ENCODE measurements at regions of chr11 and their contacts with region 1.

Region 1: DNA sequence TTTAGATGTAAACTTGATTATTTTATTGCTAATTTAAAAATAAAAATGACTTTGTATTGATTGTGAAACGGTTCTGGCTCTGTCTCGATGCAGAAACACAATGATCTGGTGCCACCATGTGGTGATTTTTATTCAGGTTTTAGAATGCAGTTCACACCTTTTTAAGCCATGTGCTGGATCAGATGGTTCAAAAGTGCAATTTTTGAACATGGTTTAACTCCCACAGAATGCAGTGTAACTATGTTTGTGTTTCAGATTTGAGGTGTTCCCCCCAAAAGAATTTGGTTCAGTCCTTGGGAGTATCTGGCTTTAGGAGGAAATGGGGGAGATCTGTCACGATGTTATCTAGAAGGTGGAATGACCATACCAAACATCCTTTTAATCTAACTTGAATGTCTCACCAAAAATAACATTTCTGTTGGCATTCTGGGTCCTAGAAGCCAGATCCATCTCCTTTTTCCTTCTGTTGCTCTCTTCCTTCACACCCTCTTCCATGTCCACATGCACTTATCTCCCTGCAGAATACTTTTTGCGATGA is 7.9 kb downstream of the MRPL16 start:
- DNase-seq: peak; percentile 75
- H3K4me3 ChIP-seq: no peak overlapping the region
- H3K27ac ChIP-seq: no peak overlapping the region
- H3K4me1 ChIP-seq: no peaks in the 10 kb centered on the region
- H3K27me3 ChIP-seq: no peaks in the 10 kb centered on the region

Region 2: GRCh38 chr11:59753650-59754493 is 48.8 kb before region 1 on chr11:
- in situ Hi-C with region 1: loop called (anchors 10 kb)
- DNase-seq: peak; percentile 88
- H3K4me3 ChIP-seq: peak overlapping the region; percentile 91
- H3K27ac ChIP-seq: no peak overlapping the region
- H3K4me1 ChIP-seq: 0 out of 2 replicates have a peak, but pooled peaks cover 12% of the 10 kb centered on the region
- H3K27me3 ChIP-seq: no peaks in the 10 kb centered on the region

Measured in GM23248 (cell line).